ENCODE measurements at regions of chr6 and their contacts with region 1.

Region 1: DNA sequence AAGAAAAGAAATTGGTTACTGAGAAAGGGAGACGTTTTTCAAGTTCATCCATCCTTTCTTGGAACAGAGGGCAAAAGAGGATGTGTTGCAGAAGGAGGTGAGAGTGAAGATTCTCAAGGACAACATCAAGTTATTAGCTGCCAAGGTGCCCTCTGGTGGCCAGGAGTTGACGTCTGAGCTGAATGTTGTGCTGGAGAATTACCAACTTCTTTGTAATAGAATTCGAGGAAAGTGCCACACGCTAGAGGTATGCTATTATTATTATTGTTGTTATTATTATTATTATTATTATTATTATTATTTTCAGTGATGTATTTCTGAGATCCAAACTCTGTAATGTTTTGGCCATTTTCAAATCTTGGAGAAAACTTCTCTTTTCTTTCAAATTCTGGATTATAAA is 197.0 kb downstream of the UTRN start:
- DNase-seq: peak; percentile 81
- ATAC-seq: peak; percentile 80
- H3K4me3 Mint-ChIP-seq: no peak overlapping the region
- H3K27ac Mint-ChIP-seq: no peak overlapping the region
- H3K4me1 Mint-ChIP-seq: peaks cover 27% of the 10 kb centered on the region
- H3K27me3 Mint-ChIP-seq: no peaks in the 10 kb centered on the region

Region 2: DNA sequence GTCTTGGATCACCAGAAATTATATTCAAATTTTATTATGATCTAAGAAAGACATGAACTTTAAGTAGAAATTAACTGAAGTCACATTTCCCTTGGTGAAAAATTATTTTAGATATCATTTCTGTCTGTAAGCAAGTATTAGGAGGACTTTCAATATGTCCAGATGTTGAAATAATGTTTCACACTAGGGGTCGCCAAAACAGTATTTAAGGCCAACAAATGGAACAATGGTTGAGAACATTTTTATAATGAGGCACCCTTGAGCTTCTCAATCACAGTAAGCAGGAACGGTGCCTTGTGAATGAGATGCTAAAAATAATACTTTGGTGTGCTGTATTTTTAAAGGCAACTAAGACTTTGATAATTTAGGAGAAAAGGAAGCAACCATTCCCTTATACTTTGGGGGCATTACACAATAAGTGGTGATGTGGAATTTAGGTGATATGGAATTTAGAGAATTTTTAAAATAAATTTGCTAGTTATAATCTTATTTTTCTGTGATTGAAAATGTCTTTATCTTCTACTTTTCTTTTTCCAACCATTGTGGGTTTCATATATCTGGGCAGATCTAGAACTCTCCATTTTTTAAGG is 377.1 kb before region 1 on chr6:
- CTCF ChIA-PET with region 1: interaction called, 15 read pairs
- POLR2A ChIA-PET with region 1: no interaction called
- DNase-seq: peak; percentile 65
- ATAC-seq: peak; percentile 84
- H3K4me3 Mint-ChIP-seq: no peak overlapping the region
- H3K27ac Mint-ChIP-seq: no peak overlapping the region
- H3K4me1 Mint-ChIP-seq: peaks cover 4% of the 10 kb centered on the region
- H3K27me3 Mint-ChIP-seq: peaks cover 2% of the 10 kb centered on the region

Region 3: GRCh38 chr6:144460327-144461095 is 21.6 kb before region 1 on chr6:
- CTCF ChIA-PET with region 1: interaction called, 15 read pairs
- POLR2A ChIA-PET with region 1: no interaction called
- DNase-seq: peak; percentile 25
- ATAC-seq: peak; percentile 87
- H3K4me3 Mint-ChIP-seq: peak overlapping the region; percentile 2
- H3K27ac Mint-ChIP-seq: peak overlapping the region; percentile 83
- H3K4me1 Mint-ChIP-seq: peaks cover 20% of the 10 kb centered on the region
- H3K27me3 Mint-ChIP-seq: no peaks in the 10 kb centered on the region

Region 4: GRCh38 chr6:144471986-144472385 is 10.2 kb before region 1 on chr6:
- CTCF ChIA-PET with region 1: interaction called, 14 read pairs
- POLR2A ChIA-PET with region 1: no interaction called
- DNase-seq: no peak
- ATAC-seq: no peak
- H3K4me3 Mint-ChIP-seq: no peak overlapping the region
- H3K27ac Mint-ChIP-seq: peak overlapping the region; percentile 28
- H3K4me1 Mint-ChIP-seq: peaks cover 21% of the 10 kb centered on the region
- H3K27me3 Mint-ChIP-seq: no peaks in the 10 kb centered on the region

Measured in activated CD8-positive, alpha-beta T cell treated with anti-CD3 and anti-CD28 coated beads, Interleukin-2, amount 10 ng/mL, durations not matched to agents 7 days and 5 days (primary cell).